ENCODE measurements at regions of chr12 and their contacts with region 1.

Region 1: GRCh38 chr12:53220801-53221202 is 11.2 kb downstream of the RARG start:
- DNase-seq: peak; percentile 72 to 91
- ATAC-seq: peak; percentile 64 to 87 (median 75)
- H3K4me3 ChIP-seq: peak overlapping the region; percentile 83
- H3K4me3 Mint-ChIP-seq: peak overlapping the region; percentile 92
- H3K27ac ChIP-seq: peak overlapping the region; percentile 100
- H3K27ac Mint-ChIP-seq: peak overlapping the region; percentile 94 to 99
- H3K4me1 ChIP-seq: peaks cover 75% of the 10 kb centered on the region
- H3K4me1 Mint-ChIP-seq: peaks cover 72 to 92% of the 10 kb centered on the region in 2 donors
- H3K27me3 ChIP-seq: no peaks in the 10 kb centered on the region
- H3K27me3 Mint-ChIP-seq: no peaks in the 10 kb centered on the region
- CTCF ChIP-seq: no peak

Region 2: GRCh38 chr12:53180220-53180930 is 40.4 kb before region 1 on chr12 and contains the starts of genes CSAD and ZNF740:
- intact Hi-C with region 1: loop called (anchors 1 kb)
- DNase-seq: peak; percentile 90 to 99
- ATAC-seq: peak; percentile 96 to 100 (median 97)
- H3K4me3 ChIP-seq: peak within 1 kb of the TSS; percentile 74
- H3K4me3 Mint-ChIP-seq: peak within 1 kb of the TSS; percentile 95
- H3K27ac ChIP-seq: peak within 1 kb of the TSS; percentile 91
- H3K27ac Mint-ChIP-seq: peak within 1 kb of the TSS; percentile 93 to 97
- H3K4me1 ChIP-seq: peaks cover 20% of the 10 kb centered on the region
- H3K4me1 Mint-ChIP-seq: peaks cover 34 to 51% of the 10 kb centered on the region in 2 donors
- H3K27me3 ChIP-seq: no peaks in the 10 kb centered on the region
- H3K27me3 Mint-ChIP-seq: no peaks in the 10 kb centered on the region
- CTCF ChIP-seq: no peak
- total RNA-seq, gene CSAD: 50.8 to 54.4 (median 53.0) TPM
- total RNA-seq, gene ZNF740: 37.1 to 65.9 (median 45.3) TPM

Region 3: DNA sequence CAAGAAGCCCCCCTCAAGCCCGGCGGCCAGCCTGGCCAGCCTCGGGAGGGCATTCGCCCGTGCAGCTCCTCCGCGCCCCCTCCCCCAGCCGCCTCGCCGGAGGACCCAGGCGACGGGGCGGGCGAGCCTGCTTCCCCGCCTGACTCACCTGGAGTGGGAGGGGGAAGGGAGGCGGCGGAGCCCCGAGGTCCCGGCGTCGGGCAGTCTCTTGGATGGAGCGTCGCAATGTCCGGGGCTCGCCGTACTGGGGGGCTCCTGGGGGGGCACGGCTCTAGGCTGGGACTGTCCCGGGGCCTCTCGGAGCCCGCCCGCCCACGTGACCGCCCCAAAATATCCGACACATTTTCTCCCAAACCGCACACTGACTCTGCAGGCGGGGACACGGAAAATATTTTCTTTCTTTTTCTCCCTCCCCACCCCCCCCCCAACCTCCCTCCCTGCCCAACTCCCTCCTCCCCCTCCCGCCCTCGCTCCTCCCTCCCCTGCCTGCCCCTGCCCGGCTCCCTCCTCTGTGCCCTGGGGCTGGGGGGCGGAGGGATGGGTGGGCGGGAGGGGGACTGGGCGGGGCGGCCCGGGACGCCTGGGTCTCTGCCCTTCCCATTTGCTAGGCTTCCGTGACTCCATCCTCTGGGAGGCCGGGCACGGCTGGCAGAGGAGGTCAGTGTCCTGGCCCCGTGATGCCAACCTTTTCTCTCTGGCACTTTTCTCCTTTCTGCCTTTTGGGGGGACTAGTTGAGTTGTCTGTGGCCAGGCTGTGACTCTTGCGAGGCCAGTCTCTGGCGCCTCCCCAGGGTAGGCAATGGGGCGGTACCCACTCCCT is 11.2 kb after region 1 on chr12 and contains the start of gene RARG:
- intact Hi-C with region 1: loop called (anchors 1 kb)
- DNase-seq: peak; percentile 51 to 78
- ATAC-seq: peak; percentile 76 to 81 (median 80)
- H3K4me3 ChIP-seq: peak within 1 kb of the TSS; percentile 47
- H3K4me3 Mint-ChIP-seq: peak within 1 kb of the TSS; percentile 93
- H3K27ac ChIP-seq: peak within 1 kb of the TSS; percentile 63
- H3K27ac Mint-ChIP-seq: peak within 1 kb of the TSS; percentile 39 to 87
- H3K4me1 ChIP-seq: peaks cover 60% of the 10 kb centered on the region
- H3K4me1 Mint-ChIP-seq: peaks cover 27 to 48% of the 10 kb centered on the region in 2 donors
- H3K27me3 ChIP-seq: no peaks in the 10 kb centered on the region
- H3K27me3 Mint-ChIP-seq: no peaks in the 10 kb centered on the region
- CTCF ChIP-seq: no peak
- total RNA-seq, gene RARG: 24.0 to 30.6 (median 27.5) TPM

Region 4: GRCh38 chr12:53255996-53256395 is 35.2 kb after region 1 on chr12:
- intact Hi-C with region 1: no loop called
- DNase-seq: no peak
- ATAC-seq: no peak
- H3K4me3 ChIP-seq: no peak overlapping the region
- H3K4me3 Mint-ChIP-seq: no peak overlapping the region
- H3K27ac ChIP-seq: no peak overlapping the region
- H3K27ac Mint-ChIP-seq: no peak overlapping the region
- H3K4me1 ChIP-seq: peaks cover 36% of the 10 kb centered on the region
- H3K4me1 Mint-ChIP-seq: peaks cover 22 to 24% of the 10 kb centered on the region in 2 donors
- H3K27me3 ChIP-seq: no peaks in the 10 kb centered on the region
- H3K27me3 Mint-ChIP-seq: no peaks in the 10 kb centered on the region
- CTCF ChIP-seq: no peak

Region 5: DNA sequence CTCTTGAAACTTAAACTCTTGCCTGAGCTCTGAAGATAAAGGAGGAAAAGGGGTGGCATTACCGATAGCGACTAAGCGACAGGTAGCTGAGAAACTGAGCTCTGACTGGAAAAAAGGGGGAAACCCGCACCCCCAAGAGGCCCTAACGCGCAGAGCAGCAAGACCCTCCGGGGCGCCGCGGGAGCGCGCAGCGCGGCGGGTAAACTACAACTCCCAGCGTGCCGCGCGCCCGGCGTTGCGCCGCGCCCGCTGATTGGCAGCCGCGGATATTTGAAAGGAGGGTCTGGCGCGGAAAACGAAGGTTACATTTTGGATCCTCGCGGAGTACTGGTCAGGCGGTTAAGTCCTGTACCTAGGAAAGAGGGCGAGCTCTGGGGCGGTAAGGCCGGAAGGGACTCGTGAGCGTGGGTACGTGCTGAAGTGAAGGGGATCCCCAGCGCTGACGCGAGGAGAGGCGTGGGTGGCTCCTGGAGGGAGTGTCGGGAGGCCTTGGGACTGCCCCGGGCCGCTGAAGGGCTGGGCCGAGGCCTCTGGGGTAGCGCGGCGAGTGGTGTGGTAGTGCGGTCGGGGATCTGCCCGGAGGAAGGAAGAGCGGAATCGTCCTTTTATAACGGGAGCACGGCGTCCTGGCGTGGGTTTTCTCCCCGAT is 47.3 kb after region 1 on chr12 and contains the start of gene ESPL1:
- intact Hi-C with region 1: loop called (anchors 5 kb)
- DNase-seq: peak; percentile 76 to 92
- ATAC-seq: peak; percentile 90 to 93 (median 90)
- H3K4me3 ChIP-seq: peak within 1 kb of the TSS; percentile 59
- H3K4me3 Mint-ChIP-seq: peak within 1 kb of the TSS; percentile 99
- H3K27ac ChIP-seq: peak within 1 kb of the TSS; percentile 53
- H3K27ac Mint-ChIP-seq: peak within 1 kb of the TSS; percentile 91 to 93
- H3K4me1 ChIP-seq: peaks cover 23% of the 10 kb centered on the region
- H3K4me1 Mint-ChIP-seq: peaks cover 22 to 23% of the 10 kb centered on the region in 2 donors
- H3K27me3 ChIP-seq: no peaks in the 10 kb centered on the region
- H3K27me3 Mint-ChIP-seq: no peaks in the 10 kb centered on the region
- CTCF ChIP-seq: no peak
- total RNA-seq, gene ESPL1: 1.9 to 5.8 (median 3.1) TPM

Region 6: DNA sequence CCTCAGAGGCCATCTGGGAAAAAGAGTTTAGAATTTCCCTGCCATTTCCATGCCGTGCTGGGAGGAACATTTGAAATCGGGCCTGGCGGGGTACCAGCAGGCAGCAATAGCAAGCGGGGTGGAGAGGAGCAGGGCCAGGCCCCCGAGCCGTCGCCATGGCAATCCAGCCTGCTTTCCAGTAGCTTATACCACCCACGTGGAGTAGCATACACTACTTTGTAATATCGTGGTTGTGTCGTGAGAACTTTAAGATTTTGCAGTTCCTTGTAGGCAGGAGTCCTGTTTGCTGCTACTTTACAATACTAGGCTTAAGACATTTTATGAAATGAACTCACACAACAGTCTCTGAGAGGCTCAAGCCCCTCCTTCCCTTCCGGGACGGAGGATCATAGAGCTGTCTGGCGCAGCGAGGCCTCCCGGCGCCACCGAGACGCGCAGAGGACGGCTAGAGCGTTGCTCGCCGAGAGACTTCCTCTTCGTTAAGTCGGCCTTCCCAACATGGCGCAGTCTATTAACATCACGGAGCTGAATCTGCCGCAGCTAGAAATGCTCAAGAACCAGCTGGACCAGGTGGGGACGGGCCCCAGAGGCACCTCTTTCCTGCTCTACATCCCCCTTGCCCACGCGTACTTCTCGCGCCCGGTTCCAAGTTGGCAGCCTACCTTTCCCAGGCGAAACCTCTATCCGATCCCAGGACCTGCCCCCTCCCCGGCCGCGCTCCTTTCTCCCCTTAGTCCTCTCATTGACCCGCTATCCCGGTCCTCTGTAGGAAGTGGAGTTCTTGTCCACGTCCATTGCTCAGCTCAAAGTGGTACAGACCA is 74.5 kb after region 1 on chr12 and contains the start of gene PFDN5:
- intact Hi-C with region 1: loop called (anchors 5 kb)
- DNase-seq: peak; percentile 77 to 95
- ATAC-seq: peak; percentile 90 to 97 (median 92)
- H3K4me3 ChIP-seq: peak within 1 kb of the TSS; percentile 79
- H3K4me3 Mint-ChIP-seq: peak within 1 kb of the TSS; percentile 96
- H3K27ac ChIP-seq: peak within 1 kb of the TSS; percentile 75
- H3K27ac Mint-ChIP-seq: peak within 1 kb of the TSS; percentile 95 to 98
- H3K4me1 ChIP-seq: peaks cover 36% of the 10 kb centered on the region
- H3K4me1 Mint-ChIP-seq: peaks cover 42 to 46% of the 10 kb centered on the region in 2 donors
- H3K27me3 ChIP-seq: no peaks in the 10 kb centered on the region
- H3K27me3 Mint-ChIP-seq: no peaks in the 10 kb centered on the region
- CTCF ChIP-seq: no peak
- total RNA-seq, gene PFDN5: 365 to 450 (median 439) TPM